Spleen (tissue), 13 donors: ENCODE measurements at regions of chr11 and their contacts with region 1.

Region 1: DNA sequence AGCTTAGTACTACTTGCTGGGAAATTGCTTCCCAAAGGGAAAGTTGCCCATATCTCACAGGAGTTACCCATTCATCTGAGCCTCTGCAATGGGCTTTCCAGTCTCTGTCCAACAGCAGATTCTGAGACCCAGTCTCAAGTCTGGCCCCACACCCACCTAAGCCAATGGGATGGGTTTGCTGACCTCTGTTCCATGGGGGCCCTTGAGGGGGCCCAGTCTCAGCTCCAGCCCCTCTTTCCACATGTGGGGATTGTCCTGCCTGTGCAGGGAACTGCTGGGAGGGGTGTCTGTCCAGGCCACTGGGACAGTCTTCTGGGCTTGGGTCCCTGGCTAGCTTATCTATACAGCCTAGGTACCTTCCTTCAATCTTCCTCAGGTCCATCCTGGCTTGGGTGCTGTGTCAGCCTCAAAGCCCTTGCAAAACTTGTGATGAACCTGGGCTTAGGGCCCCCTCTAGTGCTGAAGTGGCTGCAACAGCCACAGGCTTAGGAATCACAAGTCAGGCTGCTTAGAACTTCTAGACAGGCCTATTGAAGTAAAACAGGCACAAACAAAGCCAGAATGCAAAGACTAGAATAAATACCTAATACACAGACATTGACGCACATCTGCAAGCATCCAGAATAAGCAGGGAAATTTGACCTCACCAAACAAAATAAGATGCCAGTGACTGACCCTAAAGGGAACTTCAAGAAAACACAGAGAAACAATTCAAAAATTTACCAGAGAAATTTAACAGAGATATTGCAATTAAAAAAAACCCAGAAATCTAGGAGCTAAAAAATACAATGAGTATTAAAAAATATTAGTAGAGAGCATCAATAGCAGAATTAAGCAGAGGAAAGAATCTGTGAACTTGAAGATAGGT is 11.7 kb upstream of the PATL1 start:
- DNase-seq: peak; percentile 79
- H3K4me3 ChIP-seq: no peak overlapping the region
- H3K27ac ChIP-seq: no peak overlapping the region
- H3K4me1 ChIP-seq: no peaks in the 10 kb centered on the region
- H3K27me3 ChIP-seq: peaks cover 0 to 15% (median 0%) of the 10 kb centered on the region in 7 donors
- CTCF ChIP-seq: peak; percentile 43 to 79 (median 62)
- POLR2A ChIP-seq: no peak

Region 2: DNA sequence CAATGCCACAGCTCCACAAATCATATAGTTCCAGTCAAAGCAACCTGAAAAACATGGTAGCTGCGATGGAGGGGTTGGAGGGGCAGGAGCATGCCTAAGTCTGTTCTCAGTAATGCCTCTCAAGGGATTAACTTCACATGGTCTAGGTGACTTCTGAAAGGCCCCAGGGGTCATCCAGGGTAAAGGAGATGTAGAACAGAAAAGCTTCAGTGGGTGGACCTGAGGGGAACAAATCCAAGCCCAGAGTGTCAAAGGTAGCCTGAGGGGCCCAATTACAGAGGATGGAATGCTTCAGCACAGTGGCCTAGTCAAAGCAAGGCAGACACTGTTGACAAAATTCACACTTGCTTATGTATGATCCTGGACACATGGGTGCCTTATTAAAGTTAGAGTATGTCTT is 145.8 kb before region 1 on chr11:
- intact Hi-C with region 1: loop called (anchors 10 kb)
- DNase-seq: no peak
- H3K4me3 ChIP-seq: no peak overlapping the region
- H3K27ac ChIP-seq: no peak overlapping the region
- H3K4me1 ChIP-seq: peaks cover 0 to 20% (median 7%) of the 10 kb centered on the region in 6 donors
- H3K27me3 ChIP-seq: no peaks in the 10 kb centered on the region
- CTCF ChIP-seq: no peak
- POLR2A ChIP-seq: no peak

Region 3: GRCh38 chr11:59625703-59626102 is 54.8 kb before region 1 on chr11:
- intact Hi-C with region 1: no loop called
- DNase-seq: no peak
- H3K4me3 ChIP-seq: no peak overlapping the region
- H3K27ac ChIP-seq: no peak overlapping the region
- H3K4me1 ChIP-seq: no peaks in the 10 kb centered on the region
- H3K27me3 ChIP-seq: no peaks in the 10 kb centered on the region
- CTCF ChIP-seq: no peak
- POLR2A ChIP-seq: no peak

Region 4: DNA sequence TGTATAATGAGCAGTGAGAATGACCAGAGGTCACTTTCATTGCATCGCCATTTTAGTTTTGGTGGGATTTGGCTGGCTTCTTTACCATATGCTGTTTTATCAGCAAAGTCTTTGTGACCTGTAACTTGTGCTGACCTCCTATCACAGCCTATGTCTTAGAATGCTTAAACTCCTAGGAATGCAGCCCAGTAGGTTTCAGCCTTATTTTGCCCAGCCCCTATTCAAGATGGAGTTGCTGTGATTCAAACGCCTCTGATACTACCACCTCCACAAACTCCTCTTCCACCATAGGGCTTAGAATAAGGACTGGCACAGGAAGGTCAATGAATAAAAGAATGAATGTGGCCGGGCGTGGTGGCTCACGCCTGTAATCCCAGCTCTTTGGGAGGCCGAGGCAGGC is 53.1 kb after region 1 on chr11:
- intact Hi-C with region 1: no loop called
- DNase-seq: no peak
- H3K4me3 ChIP-seq: no peak overlapping the region
- H3K27ac ChIP-seq: no peak overlapping the region
- H3K4me1 ChIP-seq: peaks cover 0 to 3% (median 0%) of the 10 kb centered on the region in 6 donors
- H3K27me3 ChIP-seq: no peaks in the 10 kb centered on the region
- CTCF ChIP-seq: no peak
- POLR2A ChIP-seq: no peak